A673 (cell line): ENCODE measurements at regions of chrX and their contacts with region 1.

Region 1: DNA sequence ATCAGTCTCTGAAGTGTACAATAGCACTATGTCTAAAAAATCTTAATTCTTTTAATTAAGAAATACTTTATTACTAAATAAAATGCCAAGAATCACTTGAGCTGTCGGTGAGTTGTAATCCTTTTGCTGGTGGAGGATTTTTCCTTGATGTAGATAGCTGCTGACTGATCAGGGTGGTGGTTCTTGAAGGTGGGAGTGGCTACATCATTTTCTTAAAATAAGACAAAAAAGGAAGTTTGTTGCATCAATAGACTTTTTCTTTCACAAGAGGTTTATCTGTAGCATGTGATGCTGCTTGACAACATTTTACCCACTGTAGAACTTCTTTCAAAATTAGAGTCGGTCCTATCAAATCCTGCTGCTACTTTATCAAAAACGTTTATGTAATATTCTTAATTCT is 68.8 kb upstream of the ZC4H2 start:
- DNase-seq: no peak
- H3K4me3 ChIP-seq: no peak overlapping the region
- H3K27ac ChIP-seq: no peak overlapping the region
- H3K4me1 ChIP-seq: no peaks in the 10 kb centered on the region
- H3K27me3 ChIP-seq: no peaks in the 10 kb centered on the region
- CTCF ChIP-seq: no peak

Region 2: DNA sequence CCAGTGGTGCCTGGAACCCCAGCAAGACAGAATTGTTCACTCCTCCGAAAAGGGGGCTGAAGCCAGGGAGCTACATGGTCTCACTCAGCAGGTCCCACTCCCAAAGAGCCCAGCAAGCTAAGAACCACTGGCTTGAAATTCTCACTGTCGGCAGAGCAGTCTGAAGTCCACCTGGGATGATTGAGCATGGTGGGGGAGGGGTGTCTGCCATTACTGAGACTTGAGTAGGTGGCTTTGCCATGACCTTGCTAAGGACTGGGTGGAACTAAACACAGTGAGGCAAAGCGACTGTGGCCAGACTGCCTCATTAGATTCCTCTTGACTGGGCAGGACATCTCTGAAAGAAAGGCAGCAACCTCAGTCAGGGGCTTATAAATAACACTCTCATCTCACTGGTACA is 53.9 kb after region 1 on chrX:
- CTCF ChIA-PET with region 1: no interaction called
- POLR2A ChIA-PET with region 1: no interaction called
- intact Hi-C with region 1: loop called (anchors 10 kb)
- DNase-seq: no peak
- H3K4me3 ChIP-seq: no peak overlapping the region
- H3K27ac ChIP-seq: no peak overlapping the region
- H3K4me1 ChIP-seq: no peaks in the 10 kb centered on the region
- H3K27me3 ChIP-seq: no peaks in the 10 kb centered on the region
- CTCF ChIP-seq: no peak